OCI-LY7 (cell line): ENCODE measurements at regions of chr4 and their contacts with region 1.

Region 1: GRCh38 chr4:67327262-67328017 is 217.9 kb downstream of the CENPC start:
- DNase-seq: peak; percentile 70
- H3K4me3 ChIP-seq: no peak overlapping the region
- H3K27ac ChIP-seq: no peak overlapping the region
- H3K4me1 ChIP-seq: no peaks in the 10 kb centered on the region
- CTCF ChIP-seq: peak; percentile 98

Region 2: GRCh38 chr4:67087897-67088296 is 239.5 kb before region 1 on chr4:
- CTCF ChIA-PET with region 1: no interaction called
- POLR2A ChIA-PET with region 1: no interaction called
- intact Hi-C with region 1: loop called (anchors 2 kb)
- DNase-seq: peak; percentile 42
- H3K4me3 ChIP-seq: no peak overlapping the region
- H3K27ac ChIP-seq: no peak overlapping the region
- H3K4me1 ChIP-seq: no peaks in the 10 kb centered on the region
- CTCF ChIP-seq: peak; percentile 89

Region 3: DNA sequence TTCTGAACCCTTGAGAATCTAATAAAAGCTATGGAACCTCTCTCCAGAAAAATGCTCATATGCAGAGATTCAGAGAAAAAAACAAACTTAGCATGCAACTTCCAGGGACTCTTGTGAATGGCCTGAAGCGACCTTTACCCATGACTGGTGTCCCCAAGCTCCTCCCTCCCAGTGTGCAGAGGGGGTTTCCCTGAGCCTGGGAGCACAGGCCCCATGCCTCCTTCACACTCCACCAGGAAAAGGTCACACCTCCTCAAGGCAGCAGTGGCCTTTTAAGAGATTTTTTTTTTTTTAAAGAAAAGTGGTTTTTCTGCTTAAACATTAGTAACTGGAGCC is 386.8 kb after region 1 on chr4:
- CTCF ChIA-PET with region 1: no interaction called
- POLR2A ChIA-PET with region 1: no interaction called
- intact Hi-C with region 1: no loop called
- DNase-seq: no peak
- H3K4me3 ChIP-seq: no peak overlapping the region
- H3K27ac ChIP-seq: no peak overlapping the region
- H3K4me1 ChIP-seq: no peaks in the 10 kb centered on the region
- CTCF ChIP-seq: no peak